ENCODE measurements at regions of chr15 and their contacts with region 1.

Region 1: GRCh38 chr15:31472636-31473384 is 146.2 kb downstream of the KLF13 start:
- DNase-seq: peak; percentile 69
- H3K4me3 Mint-ChIP-seq: peak overlapping the region; percentile 65
- H3K27ac Mint-ChIP-seq: peak overlapping the region; percentile 80
- H3K4me1 Mint-ChIP-seq: peaks cover 35% of the 10 kb centered on the region
- H3K27me3 Mint-ChIP-seq: no peaks in the 10 kb centered on the region

Region 2: GRCh38 chr15:31391687-31392671 is 80.8 kb before region 1 on chr15:
- CTCF ChIA-PET with region 1: interaction called, 9 read pairs
- POLR2A ChIA-PET with region 1: interaction called, 11 read pairs
- DNase-seq: peak; percentile 87
- H3K4me3 Mint-ChIP-seq: peak overlapping the region; percentile 88
- H3K27ac Mint-ChIP-seq: peak overlapping the region; percentile 80
- H3K4me1 Mint-ChIP-seq: peaks cover 49% of the 10 kb centered on the region
- H3K27me3 Mint-ChIP-seq: no peaks in the 10 kb centered on the region

Region 3: DNA sequence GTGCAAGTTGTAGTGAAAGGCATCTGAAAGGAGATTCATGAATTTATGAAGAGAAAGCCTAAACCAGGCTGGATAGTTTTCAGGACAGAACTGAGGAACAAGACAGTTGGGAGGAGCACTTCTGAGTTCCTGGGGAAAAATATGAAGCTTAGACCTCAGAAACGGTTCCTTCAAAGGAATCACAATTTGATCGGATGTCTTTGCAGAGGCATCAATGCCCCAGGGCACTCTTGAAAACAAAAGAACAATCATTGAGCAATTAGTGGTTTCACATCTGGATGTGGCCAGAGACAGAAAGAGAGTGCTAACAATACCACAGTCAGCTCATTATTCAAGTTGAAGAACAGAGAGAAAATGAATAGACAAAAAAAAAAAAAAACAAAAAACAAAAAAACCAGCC is 60.0 kb before region 1 on chr15:
- CTCF ChIA-PET with region 1: no interaction called
- POLR2A ChIA-PET with region 1: no interaction called
- DNase-seq: no peak
- H3K4me3 Mint-ChIP-seq: no peak overlapping the region
- H3K27ac Mint-ChIP-seq: no peak overlapping the region
- H3K4me1 Mint-ChIP-seq: peaks cover 7% of the 10 kb centered on the region
- H3K27me3 Mint-ChIP-seq: peaks cover 13% of the 10 kb centered on the region

Region 4: DNA sequence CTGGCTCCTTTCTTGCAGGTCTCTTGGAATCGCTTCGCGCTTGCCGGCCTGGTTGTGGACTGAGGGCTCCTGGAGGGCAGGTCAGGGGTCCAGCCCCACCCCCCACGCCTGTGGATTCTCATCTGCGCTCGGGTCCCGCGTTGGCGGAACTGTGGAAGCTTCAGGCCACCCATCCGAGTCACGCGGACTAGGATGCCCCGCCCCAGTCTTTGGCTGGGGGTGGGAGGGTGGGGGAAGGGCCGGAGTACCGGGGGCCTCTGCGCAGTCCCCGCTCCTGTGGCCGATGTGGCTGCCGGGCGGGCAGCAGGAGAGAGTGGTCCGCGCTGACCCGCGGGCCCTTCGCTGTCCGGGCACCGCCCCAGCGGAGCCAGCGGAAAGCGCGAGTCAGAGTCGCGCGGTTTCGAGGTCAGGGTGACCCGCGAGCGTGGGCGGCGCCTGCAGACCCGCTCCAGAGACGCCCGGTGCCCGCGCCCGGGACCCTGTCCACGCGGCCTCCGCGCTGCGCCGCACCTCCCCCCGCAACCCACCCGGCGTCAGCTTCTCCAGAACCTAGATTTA is 32.0 kb before region 1 on chr15:
- CTCF ChIA-PET with region 1: interaction called, 10 read pairs
- POLR2A ChIA-PET with region 1: interaction called, 47 read pairs
- DNase-seq: peak; percentile 60
- H3K4me3 Mint-ChIP-seq: peak overlapping the region; percentile 77
- H3K27ac Mint-ChIP-seq: peak overlapping the region; percentile 81
- H3K4me1 Mint-ChIP-seq: peaks cover 69% of the 10 kb centered on the region
- H3K27me3 Mint-ChIP-seq: no peaks in the 10 kb centered on the region

Region 5: DNA sequence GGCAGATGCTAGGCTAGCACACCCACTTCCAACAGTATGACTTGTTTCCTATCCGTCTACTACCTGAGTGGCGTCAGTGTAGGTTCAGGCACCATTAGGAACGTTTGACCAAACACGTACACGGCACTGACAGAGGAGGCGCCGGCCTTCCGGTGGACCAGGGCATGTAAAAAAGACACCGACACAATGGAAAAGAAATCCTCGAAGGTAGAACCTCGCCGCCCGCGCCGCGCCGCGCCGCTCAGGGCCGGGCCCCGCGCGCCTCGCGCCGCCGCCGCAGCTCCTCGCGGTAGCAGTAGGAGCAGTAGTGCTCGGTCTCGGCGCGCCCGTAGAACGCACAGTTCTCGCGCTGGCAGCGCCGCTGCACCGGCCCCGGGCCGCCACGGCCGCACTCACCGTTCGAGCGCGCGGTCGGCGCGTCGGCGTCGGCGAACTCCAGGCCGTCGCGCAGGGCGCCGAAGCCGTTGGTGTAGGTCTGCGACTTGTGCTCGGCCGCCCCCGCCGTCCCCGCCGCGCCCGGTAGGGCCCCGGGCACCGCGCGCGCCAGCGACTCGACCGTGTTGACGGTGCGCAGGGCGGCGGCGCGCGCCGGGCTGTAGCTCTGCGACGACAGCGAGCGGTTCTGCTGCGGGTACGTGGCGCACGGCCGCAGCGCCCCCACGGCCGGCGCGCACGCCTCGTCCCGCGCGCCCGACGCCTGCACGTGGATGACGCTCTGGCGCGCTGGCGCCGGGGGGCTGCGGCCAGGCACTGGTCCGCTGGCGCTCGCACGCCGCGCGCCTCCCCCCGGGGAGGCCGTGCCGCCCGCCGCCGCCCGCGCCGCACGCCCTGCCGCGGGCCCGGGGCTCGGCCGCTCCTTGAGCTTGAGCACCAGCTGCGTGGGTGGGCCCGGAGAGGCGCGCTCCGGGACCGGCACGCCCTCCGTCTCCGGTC is 10.5 kb after region 1 on chr15:
- CTCF ChIA-PET with region 1: interaction called, 37 read pairs
- POLR2A ChIA-PET with region 1: interaction called, 43 read pairs
- DNase-seq: peak; percentile 64
- H3K4me3 Mint-ChIP-seq: peak overlapping the region; percentile 86
- H3K27ac Mint-ChIP-seq: peak overlapping the region; percentile 86
- H3K4me1 Mint-ChIP-seq: peaks cover 63% of the 10 kb centered on the region
- H3K27me3 Mint-ChIP-seq: peaks cover 7% of the 10 kb centered on the region

Region 6: GRCh38 chr15:31511707-31512310 is 39.0 kb after region 1 on chr15:
- CTCF ChIA-PET with region 1: no interaction called
- POLR2A ChIA-PET with region 1: no interaction called
- DNase-seq: no peak
- H3K4me3 Mint-ChIP-seq: no peak overlapping the region
- H3K27ac Mint-ChIP-seq: no peak overlapping the region
- H3K4me1 Mint-ChIP-seq: peaks cover 8% of the 10 kb centered on the region
- H3K27me3 Mint-ChIP-seq: peaks cover 10% of the 10 kb centered on the region

Region 7: DNA sequence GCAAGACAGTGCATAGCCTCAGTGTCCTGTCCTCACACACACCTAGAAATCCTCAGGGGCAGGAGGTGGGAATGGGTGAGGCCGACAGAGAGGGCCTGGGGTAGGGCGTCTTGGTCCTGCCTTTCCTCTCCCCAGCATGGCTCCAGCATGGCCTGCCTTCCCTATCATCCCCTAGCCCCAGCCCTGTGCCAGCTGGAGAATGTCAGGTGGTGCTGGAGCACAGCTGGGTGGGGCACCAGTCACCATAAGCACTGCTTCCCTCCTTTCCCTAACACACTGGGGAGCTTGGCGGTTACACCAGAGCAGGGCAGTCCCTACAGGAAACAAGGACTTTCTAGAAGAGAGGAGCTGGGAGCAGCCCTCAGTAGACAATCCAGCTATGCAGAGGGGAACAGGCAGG is 90.6 kb after region 1 on chr15:
- CTCF ChIA-PET with region 1: no interaction called
- POLR2A ChIA-PET with region 1: no interaction called
- DNase-seq: no peak
- H3K4me3 Mint-ChIP-seq: no peak overlapping the region
- H3K27ac Mint-ChIP-seq: no peak overlapping the region
- H3K4me1 Mint-ChIP-seq: no peaks in the 10 kb centered on the region
- H3K27me3 Mint-ChIP-seq: no peaks in the 10 kb centered on the region